IMR-90 (cell line): ENCODE measurements at regions of chr22 and their contacts with region 1.

Region 1: DNA sequence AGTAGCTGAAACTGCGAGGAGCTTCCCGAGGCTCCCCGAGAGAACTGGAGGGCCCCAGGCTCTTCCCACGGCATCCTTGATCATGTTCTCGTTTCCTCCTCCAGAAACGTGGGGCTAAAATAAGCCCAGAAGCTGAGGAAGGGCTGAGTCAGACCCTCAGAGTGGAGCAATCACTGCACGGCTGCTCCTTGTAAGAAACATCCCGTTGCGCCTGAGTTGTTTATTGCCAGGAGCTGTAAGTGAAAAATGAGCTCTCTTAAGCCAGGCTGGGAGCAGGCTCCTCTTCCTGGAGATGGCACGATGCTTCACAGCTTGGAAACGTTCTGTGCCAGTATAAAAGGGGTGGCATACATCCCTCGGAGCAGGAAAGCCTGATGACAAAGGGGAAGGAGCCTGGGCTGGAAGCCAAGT is 47.3 kb upstream of the SYN3 start:
- DNase-seq: peak; percentile 28
- ATAC-seq: peak; percentile 72
- H3K4me3 ChIP-seq: no peak overlapping the region
- H3K27ac ChIP-seq: no peak overlapping the region
- H3K4me1 ChIP-seq: no peaks in the 10 kb centered on the region
- H3K27me3 ChIP-seq: no peaks in the 10 kb centered on the region
- CTCF ChIP-seq: no peak
- POLR2A ChIP-seq: no peak
- RAD21 ChIP-seq: no peak

Region 2: GRCh38 chr22:32920032-32920628 is 185.4 kb before region 1 on chr22:
- CTCF ChIA-PET with region 1: no interaction called
- POLR2A ChIA-PET with region 1: no interaction called
- dilution Hi-C with region 1: no loop called
- in situ Hi-C with region 1: no loop called
- intact Hi-C with region 1: no loop called
- DNase-seq: peak; percentile 33
- ATAC-seq: peak; percentile 44
- H3K4me3 ChIP-seq: no peak overlapping the region
- H3K27ac ChIP-seq: no peak overlapping the region
- H3K4me1 ChIP-seq: no peaks in the 10 kb centered on the region; the same call in 1 of the 2 replicates
- H3K27me3 ChIP-seq: peaks cover 44% of the 10 kb centered on the region
- CTCF ChIP-seq: no peak
- POLR2A ChIP-seq: no peak
- RAD21 ChIP-seq: no peak

Region 3: DNA sequence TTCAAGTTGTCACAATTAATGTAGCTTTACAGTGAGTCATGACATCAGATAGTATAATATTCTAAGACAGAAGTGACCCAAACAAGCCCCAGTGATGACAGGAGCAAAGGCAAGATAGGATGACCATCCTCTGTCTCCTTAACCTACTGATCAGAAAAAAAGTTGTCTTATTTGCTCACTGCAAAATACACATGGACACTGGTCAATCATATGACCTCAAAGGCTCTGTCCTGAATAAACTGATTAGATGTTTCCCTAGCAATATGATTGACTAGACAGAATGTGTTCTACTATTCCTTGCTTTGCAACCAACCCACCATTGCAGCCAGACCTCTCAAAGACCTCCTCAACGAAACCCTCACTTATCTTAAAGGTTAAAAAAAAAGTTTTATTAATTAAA is 164.8 kb before region 1 on chr22:
- CTCF ChIA-PET with region 1: no interaction called
- POLR2A ChIA-PET with region 1: no interaction called
- dilution Hi-C with region 1: no loop called
- in situ Hi-C with region 1: no loop called
- intact Hi-C with region 1: no loop called
- DNase-seq: no peak
- ATAC-seq: no peak
- H3K4me3 ChIP-seq: no peak overlapping the region
- H3K27ac ChIP-seq: no peak overlapping the region
- H3K4me1 ChIP-seq: no peaks in the 10 kb centered on the region
- H3K27me3 ChIP-seq: no peaks in the 10 kb centered on the region
- CTCF ChIP-seq: no peak
- POLR2A ChIP-seq: no peak
- RAD21 ChIP-seq: no peak

Region 4: DNA sequence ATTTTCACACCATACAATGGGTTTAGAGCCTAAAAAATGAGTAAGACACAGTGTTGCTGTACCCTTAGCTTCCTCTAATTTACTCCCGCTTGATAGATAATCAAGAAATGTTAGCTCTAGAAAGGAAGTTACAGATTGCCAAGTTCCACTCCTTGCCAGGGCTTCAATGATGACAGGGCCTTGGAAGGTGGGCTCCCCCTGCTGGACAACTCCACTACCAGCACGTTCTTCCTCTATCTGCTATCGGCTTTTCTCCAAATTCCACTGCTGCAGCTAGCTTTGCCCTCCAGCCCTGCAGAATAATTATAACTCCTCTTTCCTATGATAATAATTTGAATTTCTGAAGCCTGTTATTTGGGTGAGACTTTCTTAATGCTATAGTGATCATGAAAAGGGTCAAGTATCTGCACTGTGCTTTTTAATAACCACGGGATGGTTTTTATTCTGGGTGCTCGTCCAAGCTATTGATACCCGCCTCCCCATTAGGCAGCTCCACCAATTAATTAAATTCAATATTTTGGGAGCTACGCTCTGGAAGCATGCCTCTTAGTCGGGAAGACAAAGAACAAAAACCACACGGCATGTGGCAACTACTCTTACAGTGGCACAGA is 56.3 kb before region 1 on chr22:
- CTCF ChIA-PET with region 1: no interaction called
- POLR2A ChIA-PET with region 1: no interaction called
- dilution Hi-C with region 1: no loop called
- in situ Hi-C with region 1: no loop called
- intact Hi-C with region 1: loop called (anchors 10 kb)
- DNase-seq: peak; percentile 67
- ATAC-seq: peak; percentile 95
- H3K4me3 ChIP-seq: no peak overlapping the region
- H3K27ac ChIP-seq: no peak overlapping the region
- H3K4me1 ChIP-seq: no peaks in the 10 kb centered on the region
- H3K27me3 ChIP-seq: peaks cover 3% of the 10 kb centered on the region; the same call in 1 of the 2 replicates
- CTCF ChIP-seq: peak; percentile 78
- POLR2A ChIP-seq: no peak
- RAD21 ChIP-seq: peak; percentile 52

Region 5: DNA sequence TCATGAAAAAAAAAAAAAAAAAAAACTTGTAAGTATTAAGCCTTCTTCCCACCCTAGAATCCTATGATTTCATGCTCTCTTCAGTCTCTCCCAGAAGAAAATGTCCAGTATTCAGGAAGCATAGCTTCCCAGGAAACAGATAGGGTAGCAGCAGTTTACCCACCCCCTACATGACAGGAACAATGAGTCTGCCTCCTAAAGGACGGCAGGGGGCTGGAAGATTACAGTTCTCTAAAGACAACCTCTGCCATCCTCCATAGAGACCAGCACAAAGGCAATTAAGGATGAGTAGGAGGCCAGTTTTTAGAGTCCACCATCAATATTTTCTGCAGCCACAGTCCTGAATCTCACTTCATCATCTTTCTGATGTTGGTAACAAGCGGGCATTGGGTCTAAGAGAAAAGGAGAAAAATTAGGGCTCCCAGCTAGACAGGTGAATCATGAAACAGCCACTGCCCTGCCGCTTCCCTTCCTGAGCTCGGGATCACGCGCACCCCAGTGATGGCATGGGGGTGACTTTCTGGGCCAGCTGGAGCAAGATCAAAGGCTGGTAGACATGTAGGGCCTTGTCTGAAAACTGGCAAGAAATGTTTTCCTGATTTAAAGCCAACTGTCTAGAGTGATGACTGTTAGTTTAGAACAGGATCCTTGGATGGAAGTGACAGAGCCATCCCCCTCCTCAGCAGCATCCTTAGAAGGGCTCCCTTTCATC is 491.9 kb after region 1 on chr22:
- CTCF ChIA-PET with region 1: no interaction called
- POLR2A ChIA-PET with region 1: no interaction called
- dilution Hi-C with region 1: no loop called
- in situ Hi-C with region 1: no loop called
- intact Hi-C with region 1: no loop called
- DNase-seq: no peak
- ATAC-seq: no peak
- H3K4me3 ChIP-seq: no peak overlapping the region
- H3K27ac ChIP-seq: no peak overlapping the region
- H3K4me1 ChIP-seq: no peaks in the 10 kb centered on the region
- H3K27me3 ChIP-seq: no peaks in the 10 kb centered on the region
- CTCF ChIP-seq: no peak
- POLR2A ChIP-seq: no peak
- RAD21 ChIP-seq: no peak